CD4-positive, alpha-beta T cell (primary cell): ENCODE measurements at regions of chr22 and their contacts with region 1.

Region 1: GRCh38 chr22:20581503-20582170 is 74.2 kb downstream of the MED15 start:
- DNase-seq: peak in 1 of 14 experiments; percentile 2
- ATAC-seq: no peak
- H3K4me3 ChIP-seq: no peak overlapping the region
- H3K4me3 Mint-ChIP-seq: no peak overlapping the region
- H3K27ac ChIP-seq: peak overlapping the region in 1 of 2 donors; percentile 39
- H3K27ac Mint-ChIP-seq: peak overlapping the region; percentile 53
- H3K4me1 ChIP-seq: peaks cover 60% of the 10 kb centered on the region
- H3K4me1 Mint-ChIP-seq: peaks cover 46% of the 10 kb centered on the region
- H3K27me3 ChIP-seq: no peaks in the 10 kb centered on the region
- H3K27me3 Mint-ChIP-seq: no peaks in the 10 kb centered on the region
- CTCF ChIP-seq: no peak

Region 2: GRCh38 chr22:20600137-20600673 is 18.6 kb after region 1 on chr22:
- CTCF ChIA-PET with region 1: no interaction called
- POLR2A ChIA-PET with region 1: no interaction called
- intact Hi-C with region 1: loop called in 1 of 2 experiments (anchors 2 kb)
- DNase-seq: no peak
- ATAC-seq: no peak
- H3K4me3 ChIP-seq: no peak overlapping the region
- H3K4me3 Mint-ChIP-seq: no peak overlapping the region
- H3K27ac ChIP-seq: no peak overlapping the region
- H3K27ac Mint-ChIP-seq: no peak overlapping the region
- H3K4me1 ChIP-seq: no peaks in the 10 kb centered on the region
- H3K4me1 Mint-ChIP-seq: no peaks in the 10 kb centered on the region
- H3K27me3 ChIP-seq: no peaks in the 10 kb centered on the region
- H3K27me3 Mint-ChIP-seq: no peaks in the 10 kb centered on the region
- CTCF ChIP-seq: no peak